ENCODE measurements at regions of chr1 and their contacts with region 1.

Region 1: GRCh38 chr1:21490774-21491553 is 18.3 kb upstream of the ALPL start:
- DNase-seq: no peak
- ATAC-seq: peak; percentile 78
- H3K4me3 ChIP-seq: no peak overlapping the region
- H3K27ac ChIP-seq: no peak overlapping the region
- H3K4me1 ChIP-seq: peaks cover 0 to 11% of the 10 kb centered on the region in 2 experiments; a peak in 1 of 4 replicates
- H3K27me3 ChIP-seq: no peaks in the 10 kb centered on the region
- CTCF ChIP-seq: peak; percentile 32 to 63 (median 59); a peak in 5 of 6 replicates
- POLR2A ChIP-seq: no peak
- RAD21 ChIP-seq: peak; percentile 66

Region 2: GRCh38 chr1:21378705-21379494 is 112.1 kb before region 1 on chr1:
- CTCF ChIA-PET with region 1: no interaction called
- POLR2A ChIA-PET with region 1: no interaction called
- RAD21 ChIA-PET with region 1: no interaction called
- intact Hi-C with region 1: loop called (anchors 10 kb)
- DNase-seq: no peak
- ATAC-seq: no peak
- H3K4me3 ChIP-seq: no peak overlapping the region
- H3K27ac ChIP-seq: no peak overlapping the region
- H3K4me1 ChIP-seq: no peaks in the 10 kb centered on the region
- H3K27me3 ChIP-seq: no peaks in the 10 kb centered on the region
- CTCF ChIP-seq: no peak
- POLR2A ChIP-seq: no peak
- RAD21 ChIP-seq: no peak

Region 3: GRCh38 chr1:21451212-21451812 is 39.7 kb before region 1 on chr1:
- CTCF ChIA-PET with region 1: interaction called, 3 read pairs
- POLR2A ChIA-PET with region 1: no interaction called
- RAD21 ChIA-PET with region 1: no interaction called
- intact Hi-C with region 1: loop called (anchors 2 kb)
- DNase-seq: no peak
- ATAC-seq: no peak
- H3K4me3 ChIP-seq: no peak overlapping the region
- H3K27ac ChIP-seq: no peak overlapping the region
- H3K4me1 ChIP-seq: peaks cover 0 to 11% of the 10 kb centered on the region in 2 experiments; a peak in 2 of 4 replicates
- H3K27me3 ChIP-seq: no peaks in the 10 kb centered on the region
- CTCF ChIP-seq: no peak
- POLR2A ChIP-seq: no peak
- RAD21 ChIP-seq: no peak